Activated CD4-positive, alpha-beta T cell treated with anti-CD3 and anti-CD28 coated beads, Interleukin-2, amount 10 ng/mL, durations not matched to agents 24 days and 14 days (primary cell): ENCODE measurements at regions of chr5 and their contacts with region 1.

Region 1: GRCh38 chr5:35902046-35902676 is 36.3 kb downstream of the CAPSL start:
- DNase-seq: peak; percentile 87
- H3K4me3 Mint-ChIP-seq: peak overlapping the region; percentile 36
- H3K27ac Mint-ChIP-seq: peak overlapping the region; percentile 79
- H3K4me1 Mint-ChIP-seq: peaks cover 76% of the 10 kb centered on the region
- H3K27me3 Mint-ChIP-seq: no peaks in the 10 kb centered on the region

Region 2: DNA sequence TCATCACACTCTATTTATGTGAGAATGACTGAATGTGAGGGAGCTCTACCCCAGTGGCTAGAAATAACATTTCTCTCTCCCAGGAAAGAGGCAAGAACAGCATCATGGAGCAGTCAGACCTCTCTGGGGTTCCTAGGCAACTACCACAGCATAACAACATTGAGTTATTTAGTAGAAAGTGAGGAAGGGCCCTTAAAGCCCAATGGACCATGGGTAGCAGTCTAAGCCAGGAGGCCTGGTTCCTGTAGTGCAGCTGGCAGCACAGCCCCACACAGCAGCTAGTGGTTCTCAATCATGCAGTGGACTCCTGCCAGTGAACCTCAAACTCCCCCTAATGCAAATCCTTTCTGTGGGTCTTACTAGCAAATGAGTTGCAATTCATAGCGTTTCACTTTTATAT is 229.2 kb before region 1 on chr5:
- intact Hi-C with region 1: loop called (anchors 1 kb)
- DNase-seq: peak; percentile 86
- H3K4me3 Mint-ChIP-seq: peak overlapping the region; percentile 51
- H3K27ac Mint-ChIP-seq: peak overlapping the region; percentile 80
- H3K4me1 Mint-ChIP-seq: peaks cover 45% of the 10 kb centered on the region
- H3K27me3 Mint-ChIP-seq: no peaks in the 10 kb centered on the region

Region 3: GRCh38 chr5:35785601-35786085 is 116.5 kb before region 1 on chr5:
- intact Hi-C with region 1: loop called (anchors 1 kb)
- DNase-seq: peak; percentile 81
- H3K4me3 Mint-ChIP-seq: peak overlapping the region; percentile 46
- H3K27ac Mint-ChIP-seq: peak overlapping the region; percentile 84
- H3K4me1 Mint-ChIP-seq: peaks cover 66% of the 10 kb centered on the region
- H3K27me3 Mint-ChIP-seq: no peaks in the 10 kb centered on the region

Region 4: DNA sequence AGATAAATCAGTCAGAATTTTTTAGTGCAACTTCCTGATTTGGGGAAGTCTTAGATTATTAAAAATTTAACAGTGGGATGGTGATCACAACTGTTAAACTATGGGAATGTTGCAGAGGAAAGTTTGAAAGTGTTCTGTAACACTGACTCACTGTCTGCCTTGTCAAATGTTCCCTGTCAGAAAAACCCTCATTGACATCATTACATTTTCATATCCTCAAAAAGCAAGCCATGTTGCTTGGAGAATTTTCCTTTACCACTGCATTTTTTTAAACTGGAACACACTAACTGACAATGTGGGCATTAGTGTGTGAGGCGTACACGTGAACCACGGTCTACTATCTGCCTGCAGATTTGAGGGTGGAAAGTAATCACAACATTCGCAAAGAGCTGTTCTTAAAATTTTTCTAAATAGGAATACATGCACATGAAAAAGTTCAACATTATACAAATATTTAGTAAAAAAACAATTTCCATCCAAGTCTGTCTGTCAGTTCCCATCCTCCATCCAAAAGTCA is 74.0 kb before region 1 on chr5:
- intact Hi-C with region 1: loop called (anchors 2 kb)
- DNase-seq: peak; percentile 61
- H3K4me3 Mint-ChIP-seq: peak overlapping the region; percentile 34
- H3K27ac Mint-ChIP-seq: peak overlapping the region; percentile 98
- H3K4me1 Mint-ChIP-seq: peaks cover 80% of the 10 kb centered on the region
- H3K27me3 Mint-ChIP-seq: no peaks in the 10 kb centered on the region

Region 5: DNA sequence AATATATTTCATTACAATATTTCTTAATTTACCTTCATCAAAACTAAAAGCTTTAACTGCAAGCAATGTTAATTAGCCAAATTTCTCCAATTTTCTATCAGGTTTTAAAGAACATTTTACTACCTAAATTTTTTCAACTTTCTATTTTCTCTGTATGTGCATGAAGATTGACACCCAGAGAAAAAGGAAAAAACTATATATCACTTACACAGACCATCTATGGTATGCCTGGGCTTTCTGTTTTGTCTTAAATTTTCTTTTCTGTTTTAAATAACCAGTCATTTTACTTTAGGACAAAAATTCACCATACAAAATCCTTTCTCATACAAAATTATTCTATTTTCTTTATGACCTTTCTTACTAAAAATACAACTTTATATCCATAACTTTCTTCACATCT is 59.3 kb before region 1 on chr5:
- intact Hi-C with region 1: no loop called
- DNase-seq: no peak
- H3K4me3 Mint-ChIP-seq: no peak overlapping the region
- H3K27ac Mint-ChIP-seq: no peak overlapping the region
- H3K4me1 Mint-ChIP-seq: peaks cover 18% of the 10 kb centered on the region
- H3K27me3 Mint-ChIP-seq: no peaks in the 10 kb centered on the region

Region 6: GRCh38 chr5:35884115-35884788 is 17.9 kb before region 1 on chr5:
- intact Hi-C with region 1: loop called (anchors 1 kb)
- DNase-seq: no peak
- H3K4me3 Mint-ChIP-seq: peak overlapping the region; percentile 63
- H3K27ac Mint-ChIP-seq: peak overlapping the region; percentile 86
- H3K4me1 Mint-ChIP-seq: peaks cover 35% of the 10 kb centered on the region
- H3K27me3 Mint-ChIP-seq: no peaks in the 10 kb centered on the region